ENCODE measurements at regions of chr4 and their contacts with region 1.

Region 1: DNA sequence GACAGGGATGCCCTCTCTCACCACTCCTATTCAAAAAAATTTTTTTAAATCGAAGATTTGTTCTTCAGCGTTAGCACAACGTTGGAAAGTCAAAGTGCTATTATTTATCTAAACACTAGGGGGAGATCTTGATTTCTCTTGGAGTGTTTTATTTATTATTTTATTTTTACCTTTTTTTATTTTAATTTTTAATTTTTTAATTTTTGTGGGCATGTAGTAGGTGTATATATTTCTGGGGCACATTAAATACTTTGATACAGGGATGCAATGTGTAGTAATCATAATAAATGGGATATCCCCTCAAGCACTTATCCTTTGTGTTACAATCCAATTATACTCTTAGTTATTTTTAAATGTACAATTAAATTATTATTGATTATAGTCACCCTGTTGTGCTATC is 37.4 kb upstream of the SLC10A4 start:
- DNase-seq: peak in 2 of 9 experiments; percentile 13 to 23
- ATAC-seq: no peak
- H3K4me3 ChIP-seq: no peak overlapping the region
- H3K4me3 Mint-ChIP-seq: no peak overlapping the region
- H3K27ac ChIP-seq: no peak overlapping the region
- H3K27ac Mint-ChIP-seq: no peak overlapping the region
- H3K4me1 ChIP-seq: no peaks in the 10 kb centered on the region
- H3K4me1 Mint-ChIP-seq: no peaks in the 10 kb centered on the region
- H3K27me3 ChIP-seq: no peaks in the 10 kb centered on the region
- H3K27me3 Mint-ChIP-seq: peaks cover 5% of the 10 kb centered on the region
- CTCF ChIP-seq: peak; percentile 69

Region 2: DNA sequence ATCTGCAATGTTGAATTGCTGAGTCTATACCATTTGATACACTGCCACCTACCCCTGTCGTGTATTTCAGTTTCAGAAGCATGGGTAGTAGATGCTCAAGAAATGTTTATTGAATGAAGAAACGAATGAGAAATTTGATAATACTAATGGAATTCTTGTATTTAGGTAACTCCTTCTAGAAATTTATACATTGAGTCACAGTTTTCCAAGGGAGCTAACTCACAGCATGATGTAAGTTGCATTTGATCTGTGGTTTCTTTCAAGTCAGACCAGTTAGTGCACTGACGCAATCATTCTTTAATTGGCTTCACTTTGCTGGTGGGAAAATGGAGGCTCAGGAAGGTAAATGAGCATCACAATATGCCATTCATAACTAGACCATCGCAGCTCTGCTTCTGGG is 523.1 kb after region 1 on chr4:
- CTCF ChIA-PET with region 1: no interaction called
- POLR2A ChIA-PET with region 1: no interaction called
- intact Hi-C with region 1: loop called (anchors 1 to 5 kb)
- DNase-seq: no peak
- ATAC-seq: no peak
- H3K4me3 ChIP-seq: no peak overlapping the region
- H3K4me3 Mint-ChIP-seq: no peak overlapping the region
- H3K27ac ChIP-seq: no peak overlapping the region
- H3K27ac Mint-ChIP-seq: no peak overlapping the region
- H3K4me1 ChIP-seq: no peaks in the 10 kb centered on the region
- H3K4me1 Mint-ChIP-seq: no peaks in the 10 kb centered on the region
- H3K27me3 ChIP-seq: no peaks in the 10 kb centered on the region
- H3K27me3 Mint-ChIP-seq: peaks cover 4% of the 10 kb centered on the region
- CTCF ChIP-seq: no peak

Measured in CD8-positive, alpha-beta T cell (primary cell).